AG04449 (cell line): ENCODE measurements at regions of chr1 and their contacts with region 1.

Region 1: DNA sequence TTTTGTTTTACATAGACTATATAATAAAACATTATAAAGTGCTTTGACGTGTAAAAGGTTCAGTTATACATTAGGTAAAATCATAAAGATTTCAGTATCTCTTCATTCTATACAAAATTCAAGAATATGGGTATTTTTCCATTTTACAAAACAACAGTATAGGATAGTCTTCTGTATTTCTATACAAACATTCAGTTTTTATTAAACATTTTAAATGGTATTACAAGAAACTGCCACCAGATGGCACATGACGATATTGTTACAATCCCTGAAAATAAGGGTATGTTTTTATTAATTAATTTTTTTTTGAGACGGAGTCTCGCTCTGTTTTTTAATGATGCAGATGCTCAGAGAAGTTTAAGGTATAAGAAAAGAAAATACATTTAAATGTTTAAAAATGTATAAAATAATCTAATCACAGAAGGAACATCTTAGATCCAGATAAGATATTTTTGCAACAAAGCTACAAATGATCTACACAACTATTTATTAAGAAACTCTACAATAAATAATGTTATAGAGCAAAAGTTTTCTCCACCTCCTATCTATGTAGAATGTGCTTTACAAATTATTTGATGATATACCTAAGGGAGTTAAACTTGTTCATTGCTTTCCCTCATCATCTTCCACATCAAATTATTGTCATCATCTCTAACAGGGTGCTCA is 23.5 kb upstream of the RSBN1 start:
- DNase-seq: no peak
- H3K4me3 ChIP-seq: no peak overlapping the region
- CTCF ChIP-seq: no peak

Region 2: DNA sequence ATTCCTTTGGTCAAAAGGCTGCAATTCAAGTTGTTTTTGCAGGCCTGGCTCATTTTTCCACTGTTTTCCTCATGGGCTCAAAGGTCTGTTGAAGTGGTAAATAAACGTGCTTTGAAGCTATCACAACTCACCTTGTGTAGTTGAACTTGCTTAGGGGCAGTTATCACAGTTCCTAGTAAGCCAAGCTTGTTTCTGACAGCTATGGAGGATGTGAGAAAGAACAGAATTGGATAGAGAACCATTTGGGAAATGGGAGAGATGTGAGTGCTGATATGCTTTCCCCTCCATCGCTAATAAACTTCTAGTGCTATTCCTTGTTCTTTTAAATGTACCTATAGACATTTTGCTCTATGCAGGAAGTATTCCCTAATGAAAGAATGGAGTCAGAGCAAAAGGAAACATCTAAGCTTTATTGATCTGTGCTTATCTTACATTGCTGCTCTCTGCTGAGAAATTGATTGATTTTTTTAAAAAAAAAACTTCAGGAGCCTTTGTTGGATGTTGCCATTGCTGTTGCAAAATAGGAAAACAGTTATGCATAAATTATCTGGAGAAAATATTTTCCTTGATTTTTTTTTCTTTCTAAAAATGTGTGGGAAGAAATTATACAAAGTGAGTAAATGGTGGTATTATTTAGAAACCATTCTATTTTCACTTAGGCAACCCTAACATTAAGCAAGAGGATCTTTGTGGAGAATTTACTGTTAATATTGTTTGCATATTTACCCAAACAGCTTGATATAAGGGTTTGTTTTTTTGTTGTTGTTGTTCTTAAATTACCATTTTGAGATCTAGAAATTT is 327.2 kb before region 1 on chr1:
- CTCF ChIA-PET with region 1: no interaction called
- POLR2A ChIA-PET with region 1: no interaction called
- DNase-seq: no peak
- H3K4me3 ChIP-seq: no peak overlapping the region
- CTCF ChIP-seq: no peak

Region 3: DNA sequence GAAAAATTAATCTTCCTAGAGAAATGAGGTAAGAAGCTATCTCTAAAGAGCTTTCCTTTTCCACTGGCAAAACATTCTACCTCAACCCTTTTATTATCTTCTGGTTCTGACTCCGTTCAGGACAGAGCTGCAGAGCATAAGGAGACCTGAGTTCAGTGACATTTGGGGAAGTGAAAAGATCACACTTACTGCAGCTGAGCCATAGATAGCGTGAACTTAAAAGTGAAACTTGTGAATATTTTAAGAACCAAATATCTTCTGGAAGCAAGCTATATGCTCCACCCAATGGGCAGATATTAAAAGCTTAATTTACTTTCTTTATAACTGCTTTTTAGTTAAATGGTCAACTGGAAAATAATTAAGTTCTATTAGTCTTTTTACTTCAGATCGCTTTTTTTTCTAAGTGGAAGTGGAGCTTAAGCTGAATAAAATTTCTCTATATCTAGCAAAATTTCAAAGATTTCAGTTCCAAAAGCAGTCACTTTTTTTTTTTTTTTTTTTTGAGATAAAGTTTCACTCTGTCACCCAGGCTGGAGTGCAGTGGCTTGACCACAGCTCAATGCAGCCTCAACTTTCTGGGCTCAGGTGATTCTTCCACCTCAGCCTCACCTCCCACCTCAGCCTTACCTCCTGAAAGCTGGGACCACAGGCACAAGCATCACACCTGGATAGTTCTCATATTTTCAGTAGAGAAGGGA is 23.9 kb after region 1 on chr1:
- CTCF ChIA-PET with region 1: interaction called, 24 read pairs
- POLR2A ChIA-PET with region 1: no interaction called
- DNase-seq: no peak
- H3K4me3 ChIP-seq: no peak overlapping the region
- CTCF ChIP-seq: no peak

Region 4: GRCh38 chr1:113898241-113898814 is 62.6 kb after region 1 on chr1:
- CTCF ChIA-PET with region 1: interaction called, 19 read pairs
- POLR2A ChIA-PET with region 1: no interaction called
- DNase-seq: no peak
- H3K4me3 ChIP-seq: no peak overlapping the region
- CTCF ChIP-seq: no peak

Region 5: GRCh38 chr1:113912594-113913311 is 77.0 kb after region 1 on chr1:
- CTCF ChIA-PET with region 1: interaction called, 10 read pairs
- POLR2A ChIA-PET with region 1: no interaction called
- DNase-seq: peak; percentile 60
- H3K4me3 ChIP-seq: no peak overlapping the region
- CTCF ChIP-seq: no peak

Region 6: DNA sequence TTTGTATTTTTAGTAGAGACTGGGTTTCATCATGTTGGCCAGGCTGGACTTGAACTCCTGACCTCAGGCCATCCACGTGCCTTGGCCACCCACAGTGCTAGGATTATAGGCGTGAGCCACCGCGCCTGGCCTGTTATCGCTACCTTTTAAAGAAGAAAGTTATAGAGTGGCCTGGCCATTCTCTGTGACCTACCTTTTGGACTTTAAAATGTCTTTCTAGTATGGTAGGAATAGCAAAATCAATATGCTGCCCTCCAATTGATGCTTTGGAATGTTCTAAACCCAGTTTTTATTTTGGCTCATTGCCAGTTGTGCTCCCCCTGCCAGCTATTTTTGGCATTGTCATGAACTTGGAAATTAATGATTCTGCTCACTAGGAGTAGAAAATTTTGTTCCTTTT is 113.2 kb after region 1 on chr1:
- CTCF ChIA-PET with region 1: interaction called, 16 read pairs
- POLR2A ChIA-PET with region 1: no interaction called
- DNase-seq: no peak
- H3K4me3 ChIP-seq: no peak overlapping the region
- CTCF ChIP-seq: no peak

Region 7: GRCh38 chr1:113978863-113979702 is 143.3 kb after region 1 on chr1 and contains the start of gene OLFML3:
- CTCF ChIA-PET with region 1: interaction called, 22 read pairs
- POLR2A ChIA-PET with region 1: no interaction called
- DNase-seq: peak; percentile 77
- H3K4me3 ChIP-seq: peak within 1 kb of the TSS; percentile 66
- CTCF ChIP-seq: peak; percentile 61

Region 8: DNA sequence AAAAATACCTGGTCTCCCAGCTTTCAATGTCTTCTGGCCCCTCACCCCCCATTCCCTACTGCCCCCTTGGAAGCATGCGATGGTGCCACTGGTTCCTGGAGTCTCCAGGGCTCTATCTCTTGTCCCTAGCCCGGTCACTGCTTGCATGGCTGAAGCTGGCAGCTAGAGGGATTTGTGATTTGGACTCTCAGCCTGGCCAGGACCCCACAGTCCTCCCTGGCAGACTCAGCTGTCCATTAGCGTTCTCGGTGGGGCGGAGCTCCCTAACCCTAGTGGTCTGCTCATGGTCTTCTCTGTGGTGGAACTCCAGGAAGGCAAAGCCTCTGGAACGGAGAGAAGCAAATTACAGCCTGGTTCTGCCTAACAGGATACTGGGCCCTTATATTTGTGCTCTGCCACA is 217.8 kb after region 1 on chr1:
- CTCF ChIA-PET with region 1: no interaction called
- POLR2A ChIA-PET with region 1: no interaction called
- DNase-seq: no peak
- H3K4me3 ChIP-seq: no peak overlapping the region
- CTCF ChIP-seq: no peak